Calu3 (cell line): ENCODE measurements at regions of chr20 and their contacts with region 1.

Region 1: DNA sequence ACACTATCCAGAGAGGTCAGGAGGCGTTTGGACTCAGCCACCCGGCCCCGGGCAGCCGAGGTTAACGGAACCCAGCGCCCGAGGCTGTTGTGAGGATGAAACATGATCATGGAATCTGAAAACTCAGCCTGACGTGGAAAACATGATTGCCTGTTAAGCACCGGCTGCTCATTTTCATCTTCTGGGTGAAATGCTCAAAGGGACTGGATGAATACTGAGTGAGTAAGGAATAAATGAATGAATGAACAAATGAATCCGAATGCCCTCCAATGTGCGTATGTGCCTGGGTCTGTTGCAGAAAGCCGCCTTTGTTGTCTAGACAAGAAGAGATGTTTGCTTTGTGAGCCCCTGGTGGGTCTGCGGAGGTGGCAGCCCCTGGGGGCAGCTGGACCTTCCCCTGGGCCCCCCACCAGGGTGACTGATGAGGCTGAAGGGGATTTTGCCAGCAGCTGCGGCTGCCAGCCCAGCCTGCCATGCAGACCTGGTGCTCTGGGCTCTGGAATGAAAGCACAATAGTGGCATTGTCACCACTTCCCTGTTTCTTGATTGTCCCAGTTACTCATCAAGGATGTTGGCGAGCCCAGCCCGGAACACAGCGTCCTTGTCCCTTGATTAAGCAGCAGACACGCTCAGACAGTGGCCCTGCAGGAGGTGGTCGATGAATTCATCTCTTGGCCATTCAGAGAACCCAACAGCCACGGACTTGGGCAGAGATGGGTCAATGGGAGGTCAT is 211.1 kb downstream of the ANKRD60 start:
- DNase-seq: peak; percentile 99
- H3K4me3 Mint-ChIP-seq: peak overlapping the region; percentile 12
- H3K27ac Mint-ChIP-seq: peak overlapping the region; percentile 94
- H3K4me1 Mint-ChIP-seq: peaks cover 75% of the 10 kb centered on the region
- H3K27me3 Mint-ChIP-seq: no peaks in the 10 kb centered on the region
- CTCF ChIP-seq: no peak

Region 2: DNA sequence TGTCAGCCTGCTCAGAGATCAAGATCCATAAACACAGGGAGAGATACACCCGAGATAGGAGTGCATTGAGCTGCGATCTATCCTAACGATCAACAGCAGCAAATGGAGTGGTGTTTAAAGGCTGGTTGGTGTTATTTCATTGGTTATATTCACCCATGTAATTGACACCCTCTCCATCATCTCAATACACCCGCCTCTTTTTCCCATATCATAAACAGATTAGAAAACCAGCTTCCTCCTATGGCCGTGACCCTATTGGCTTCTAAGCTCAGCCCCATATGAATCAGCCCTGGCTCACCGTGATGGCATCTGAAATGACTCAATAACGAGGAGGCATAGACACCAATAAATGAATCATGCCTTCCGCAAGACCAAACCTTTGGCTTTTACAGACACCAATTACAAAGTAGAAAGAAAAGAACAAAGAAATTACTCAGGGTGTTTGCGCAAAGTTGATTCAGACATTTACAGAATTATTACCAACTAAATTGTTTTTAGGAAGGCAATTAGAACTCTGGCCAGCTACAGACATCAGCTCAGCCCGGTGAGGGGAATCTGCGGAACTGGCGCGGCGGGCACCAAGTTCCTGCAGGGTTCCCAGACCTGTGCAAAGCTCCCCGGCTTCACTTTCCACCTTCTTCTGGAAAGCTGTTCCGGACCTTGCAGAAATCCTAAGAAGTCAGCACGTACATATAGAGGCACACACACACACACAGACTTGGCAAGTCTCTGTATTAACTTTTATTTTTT is 319.1 kb before region 1 on chr20:
- CTCF ChIA-PET with region 1: interaction called, 6 read pairs
- intact Hi-C with region 1: loop called (anchors 5 kb)
- DNase-seq: peak; percentile 94
- H3K4me3 Mint-ChIP-seq: peak overlapping the region; percentile 88
- H3K27ac Mint-ChIP-seq: peak overlapping the region; percentile 97
- H3K4me1 Mint-ChIP-seq: peaks cover 92% of the 10 kb centered on the region
- H3K27me3 Mint-ChIP-seq: no peaks in the 10 kb centered on the region
- CTCF ChIP-seq: no peak

Region 3: GRCh38 chr20:57810511-57811373 is 206.7 kb before region 1 on chr20:
- CTCF ChIA-PET with region 1: no interaction called
- intact Hi-C with region 1: loop called (anchors 5 kb)
- DNase-seq: peak; percentile 85
- H3K4me3 Mint-ChIP-seq: no peak overlapping the region
- H3K27ac Mint-ChIP-seq: peak overlapping the region; percentile 31
- H3K4me1 Mint-ChIP-seq: peaks cover 24% of the 10 kb centered on the region
- H3K27me3 Mint-ChIP-seq: peaks cover 15% of the 10 kb centered on the region
- CTCF ChIP-seq: no peak

Region 4: GRCh38 chr20:57999465-58000111 is 17.8 kb before region 1 on chr20:
- CTCF ChIA-PET with region 1: interaction called, 13 read pairs
- intact Hi-C with region 1: no loop called
- DNase-seq: peak; percentile 28
- H3K4me3 Mint-ChIP-seq: no peak overlapping the region
- H3K27ac Mint-ChIP-seq: peak overlapping the region; percentile 27
- H3K4me1 Mint-ChIP-seq: peaks cover 51% of the 10 kb centered on the region
- H3K27me3 Mint-ChIP-seq: no peaks in the 10 kb centered on the region
- CTCF ChIP-seq: no peak

Region 5: DNA sequence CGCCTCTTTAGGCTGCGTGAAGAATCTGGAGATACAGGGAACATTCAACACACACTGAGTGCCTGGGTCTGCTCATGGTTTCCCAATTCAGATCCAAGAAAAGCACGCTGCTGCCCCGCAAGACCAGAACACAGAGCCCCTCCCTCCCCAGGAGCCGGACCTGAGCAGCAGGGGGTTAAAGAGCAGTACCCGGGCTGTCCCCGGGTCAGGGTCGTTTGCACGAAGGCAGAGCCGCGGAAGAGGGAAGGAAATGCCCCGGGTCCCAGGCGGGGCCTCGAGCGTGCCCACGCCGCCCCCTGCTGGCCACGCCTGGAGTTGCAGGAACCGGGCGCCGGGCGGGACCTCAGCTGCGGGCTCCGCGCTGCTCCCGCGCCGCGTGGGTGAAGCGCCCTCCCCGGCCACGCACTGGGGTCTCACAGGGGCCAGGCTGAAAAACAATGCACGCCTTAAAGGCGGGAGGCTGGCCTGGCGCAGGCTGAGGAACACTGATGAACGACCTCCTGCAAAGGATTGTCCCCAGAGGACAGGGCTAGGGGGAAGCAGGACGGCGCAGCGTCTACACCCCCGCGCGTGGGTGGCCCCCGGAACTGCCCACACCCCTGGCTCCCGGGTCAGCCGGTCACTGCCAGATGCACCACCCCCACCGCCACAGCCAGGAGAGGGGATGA is 162.2 kb after region 1 on chr20:
- CTCF ChIA-PET with region 1: interaction called, 7 read pairs
- intact Hi-C with region 1: loop called (anchors 2 kb)
- DNase-seq: peak; percentile 92
- H3K4me3 Mint-ChIP-seq: peak overlapping the region; percentile 68
- H3K27ac Mint-ChIP-seq: peak overlapping the region; percentile 91
- H3K4me1 Mint-ChIP-seq: peaks cover 35% of the 10 kb centered on the region
- H3K27me3 Mint-ChIP-seq: no peaks in the 10 kb centered on the region
- CTCF ChIP-seq: peak; percentile 100